BJ (cell line): ENCODE measurements at regions of chr1 and their contacts with region 1.

Region 1: GRCh38 chr1:46131712-46132528 is 509 bp downstream of the PIK3R3 start:
- DNase-seq: no peak
- H3K4me3 ChIP-seq: peak overlapping the region; percentile 68
- H3K27me3 ChIP-seq: no peaks in the 10 kb centered on the region
- CTCF ChIP-seq: no peak

Region 2: DNA sequence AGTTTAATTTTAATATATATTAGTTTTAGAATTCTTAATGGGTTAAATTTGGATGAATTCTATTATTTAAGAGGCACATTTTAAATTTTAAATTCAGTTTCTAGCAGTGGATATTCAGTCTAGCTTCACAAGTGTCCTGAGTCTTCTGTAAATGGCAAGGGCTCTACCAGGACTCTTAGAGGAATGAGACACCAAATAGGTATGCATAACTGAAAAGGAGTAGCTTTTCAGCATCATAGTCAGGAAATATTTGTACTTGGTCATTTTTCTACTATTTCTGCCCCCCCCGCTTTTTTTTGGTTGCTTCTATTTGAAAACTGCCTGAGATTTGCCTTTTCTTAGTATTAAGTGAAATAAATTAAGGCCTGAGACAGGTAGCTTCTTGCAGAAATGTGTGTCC is 248.3 kb before region 1 on chr1:
- CTCF ChIA-PET with region 1: no interaction called
- POLR2A ChIA-PET with region 1: interaction called, 11 read pairs
- DNase-seq: no peak
- H3K4me3 ChIP-seq: no peak overlapping the region
- H3K27me3 ChIP-seq: no peaks in the 10 kb centered on the region
- CTCF ChIP-seq: no peak